Sigmoid colon (tissue), 7 donors: ENCODE measurements at regions of chr15 and their contacts with region 1.

Region 1: DNA sequence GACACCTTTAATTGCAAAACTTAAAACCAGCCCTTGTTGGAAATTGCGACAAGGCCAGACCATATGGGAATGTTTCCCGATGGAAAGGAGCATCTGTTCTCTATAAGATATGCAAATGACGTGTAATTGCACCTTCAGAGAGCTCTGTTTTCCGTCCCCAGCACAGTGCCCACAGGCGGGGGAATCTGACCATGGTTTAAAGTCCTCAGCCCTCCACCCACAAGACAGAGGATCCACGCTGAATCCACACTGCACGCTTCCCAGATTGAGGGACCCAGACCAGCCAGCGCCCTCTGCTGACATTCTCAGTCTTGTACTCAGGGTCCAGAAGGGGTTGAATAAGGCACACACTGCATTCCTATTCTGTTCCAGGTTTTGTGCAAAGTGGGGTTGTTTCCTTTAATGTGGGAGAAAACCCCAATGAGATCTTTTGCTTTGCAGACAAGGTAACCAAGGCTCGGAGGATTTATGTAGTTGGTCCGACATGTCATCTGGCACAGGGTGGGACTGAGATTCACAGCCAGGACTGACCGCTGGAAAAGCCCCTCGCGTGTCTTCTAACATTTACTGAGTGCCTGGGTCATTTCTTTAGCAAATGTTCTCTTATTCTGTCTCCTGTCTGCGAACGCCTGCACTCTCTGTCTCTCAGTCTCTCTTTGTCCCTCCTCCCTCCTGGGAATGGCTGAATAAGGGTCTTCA is 36.8 kb upstream of the KLHL25 start:
- DNase-seq: peak; percentile 80
- H3K4me3 ChIP-seq: no peak overlapping the region
- H3K27ac ChIP-seq: no peak overlapping the region
- H3K4me1 ChIP-seq: no peaks in the 10 kb centered on the region
- H3K27me3 ChIP-seq: no peaks in the 10 kb centered on the region
- CTCF ChIP-seq: peak; percentile 38 to 57 (median 47)
- EP300 ChIP-seq: no peak
- POLR2A ChIP-seq: no peak

Region 2: GRCh38 chr15:85318048-85318731 is 513.4 kb before region 1 on chr15:
- intact Hi-C with region 1: loop called (anchors 10 kb)
- DNase-seq: no peak
- H3K4me3 ChIP-seq: no peak overlapping the region
- H3K27ac ChIP-seq: no peak overlapping the region
- H3K4me1 ChIP-seq: peaks cover 0 to 20% (median 16%) of the 10 kb centered on the region in 4 donors
- H3K27me3 ChIP-seq: peaks cover 0 to 15% (median 0%) of the 10 kb centered on the region in 3 donors
- CTCF ChIP-seq: no peak
- EP300 ChIP-seq: no peak
- POLR2A ChIP-seq: no peak

Region 3: GRCh38 chr15:85504749-85505676 is 326.6 kb before region 1 on chr15:
- intact Hi-C with region 1: loop called (anchors 10 kb)
- DNase-seq: no peak
- H3K4me3 ChIP-seq: no peak overlapping the region
- H3K27ac ChIP-seq: peak overlapping the region; percentile 10 to 68 (median 64)
- H3K4me1 ChIP-seq: peaks cover 0 to 14% (median 8%) of the 10 kb centered on the region in 4 donors
- H3K27me3 ChIP-seq: no peaks in the 10 kb centered on the region
- CTCF ChIP-seq: peak; percentile 35 to 56 (median 48)
- EP300 ChIP-seq: no peak
- POLR2A ChIP-seq: no peak

Region 4: GRCh38 chr15:85730001-85730820 is 101.4 kb before region 1 on chr15:
- intact Hi-C with region 1: loop called (anchors 1 kb)
- DNase-seq: no peak
- H3K4me3 ChIP-seq: no peak overlapping the region
- H3K27ac ChIP-seq: peak overlapping the region in 3 of 4 donors; percentile 45 to 84 (median 73)
- H3K4me1 ChIP-seq: peaks cover 0 to 26% (median 24%) of the 10 kb centered on the region in 4 donors
- H3K27me3 ChIP-seq: no peaks in the 10 kb centered on the region
- CTCF ChIP-seq: peak; percentile 62 to 83 (median 72)
- EP300 ChIP-seq: no peak
- POLR2A ChIP-seq: no peak

Region 5: DNA sequence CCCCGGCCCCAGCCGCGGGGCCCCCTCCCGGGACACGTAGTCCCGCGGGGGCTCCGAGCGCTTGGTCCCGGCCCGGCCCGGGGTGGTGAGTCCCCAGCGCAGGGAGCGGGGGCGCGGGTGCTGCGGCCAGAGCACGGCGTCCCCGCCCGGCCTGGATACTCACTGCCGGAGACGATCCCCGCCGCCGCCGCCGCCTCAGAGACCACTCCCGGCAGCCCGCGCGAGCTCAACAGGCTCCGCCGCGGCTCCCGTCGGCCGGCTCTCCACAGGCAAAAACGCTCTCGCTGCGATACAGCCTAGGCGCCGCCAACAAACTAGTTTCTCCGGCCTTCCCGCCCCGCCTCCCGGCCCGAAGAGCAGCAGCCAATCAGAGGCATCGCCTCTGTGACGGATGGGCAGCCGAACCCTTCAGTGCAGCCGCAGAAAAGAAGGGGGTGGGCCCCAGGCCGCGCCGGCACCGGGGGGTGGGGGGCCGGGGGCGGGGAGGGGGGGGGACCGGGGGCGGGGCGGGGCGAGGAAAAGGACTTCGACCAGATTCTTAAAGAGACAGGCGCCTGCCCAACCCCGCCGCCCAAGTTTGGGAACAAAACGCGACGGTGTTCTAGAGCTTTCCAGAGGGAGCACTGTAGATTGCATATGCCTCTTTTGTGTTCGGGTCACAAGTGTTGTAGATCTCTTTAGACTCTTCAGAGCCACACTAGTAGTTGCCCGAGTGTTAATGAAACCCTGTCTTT is 36.8 kb before region 1 on chr15 and contains the start of gene KLHL25:
- intact Hi-C with region 1: loop called (anchors 5 kb)
- DNase-seq: peak; percentile 97
- H3K4me3 ChIP-seq: peak within 1 kb of the TSS; percentile 69 to 94 (median 78)
- H3K27ac ChIP-seq: peak within 1 kb of the TSS; percentile 84 to 95 (median 89)
- H3K4me1 ChIP-seq: peaks cover 0 to 24% (median 18%) of the 10 kb centered on the region in 4 donors
- H3K27me3 ChIP-seq: no peaks in the 10 kb centered on the region
- CTCF ChIP-seq: no peak
- EP300 ChIP-seq: no peak
- POLR2A ChIP-seq: peak; percentile 21 to 69
- total RNA-seq, gene KLHL25: 4.1 to 9.0 (median 6.9) TPM